Heart left ventricle (tissue), 16 donors: ENCODE measurements at regions of chr7 and their contacts with region 1.

Region 1: GRCh38 chr7:107372298-107372697 is 97.6 kb upstream of the GPR22 start:
- DNase-seq: no peak
- ATAC-seq: peak in 1 of 4 donors; percentile 60
- H3K4me3 ChIP-seq: no peak overlapping the region
- H3K27ac ChIP-seq: peak overlapping the region in 1 of 12 donors; percentile 29
- H3K4me1 ChIP-seq: peaks cover 0 to 5% (median under 1%) of the 10 kb centered on the region in 12 donors
- H3K27me3 ChIP-seq: no peaks in the 10 kb centered on the region
- CTCF ChIP-seq: no peak
- POLR2A ChIP-seq: no peak

Region 2: DNA sequence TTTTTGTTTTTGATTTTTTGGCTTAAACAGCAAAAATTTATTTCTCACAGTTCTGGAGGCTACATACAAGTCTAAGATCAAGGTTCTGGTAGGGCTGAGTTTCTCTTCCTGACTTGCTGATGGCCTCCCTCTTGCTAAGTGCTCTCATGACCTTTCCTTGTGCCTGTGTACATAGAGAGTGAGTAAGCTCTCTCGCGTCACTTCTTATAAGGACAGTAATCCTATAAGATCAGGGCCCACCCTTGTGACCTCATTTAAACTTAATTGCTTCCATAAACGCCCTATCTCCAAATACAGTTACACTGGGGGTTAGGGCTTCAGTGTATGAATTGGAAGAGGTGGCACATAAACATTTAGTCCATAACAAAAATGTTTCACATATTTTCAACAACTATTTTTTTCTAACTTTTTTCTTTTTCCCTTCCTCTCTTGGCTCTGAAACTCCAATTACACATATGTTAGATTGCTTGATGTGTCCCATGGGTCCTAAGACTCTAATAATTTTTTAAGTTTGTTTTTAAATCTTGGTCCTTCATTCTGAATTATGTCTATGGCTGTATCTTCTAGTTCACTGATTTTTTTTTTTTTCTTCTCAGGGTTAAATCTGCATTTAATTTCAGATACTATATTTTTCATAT is 53.7 kb before region 1 on chr7:
- intact Hi-C with region 1: no loop called
- DNase-seq: no peak
- ATAC-seq: no peak
- H3K4me3 ChIP-seq: no peak overlapping the region
- H3K27ac ChIP-seq: no peak overlapping the region
- H3K4me1 ChIP-seq: peaks cover 0 to 12% (median 7%) of the 10 kb centered on the region in 12 donors
- H3K27me3 ChIP-seq: no peaks in the 10 kb centered on the region
- CTCF ChIP-seq: no peak
- POLR2A ChIP-seq: no peak

Region 3: GRCh38 chr7:107414198-107414597 is 41.9 kb after region 1 on chr7:
- intact Hi-C with region 1: loop called in 1 of 10 experiments (anchors 2 kb)
- DNase-seq: no peak
- ATAC-seq: no peak
- H3K4me3 ChIP-seq: no peak overlapping the region
- H3K27ac ChIP-seq: no peak overlapping the region
- H3K4me1 ChIP-seq: no peaks in the 10 kb centered on the region
- H3K27me3 ChIP-seq: no peaks in the 10 kb centered on the region
- CTCF ChIP-seq: no peak
- POLR2A ChIP-seq: no peak

Region 4: GRCh38 chr7:107435749-107436148 is 63.5 kb after region 1 on chr7:
- intact Hi-C with region 1: no loop called
- DNase-seq: no peak
- ATAC-seq: no peak
- H3K4me3 ChIP-seq: no peak overlapping the region
- H3K27ac ChIP-seq: no peak overlapping the region
- H3K4me1 ChIP-seq: peaks cover 0 to 4% (median 0%) of the 10 kb centered on the region in 12 donors
- H3K27me3 ChIP-seq: no peaks in the 10 kb centered on the region
- CTCF ChIP-seq: no peak
- POLR2A ChIP-seq: no peak

Region 5: GRCh38 chr7:107474104-107474521 is 101.8 kb after region 1 on chr7:
- intact Hi-C with region 1: no loop called
- DNase-seq: no peak
- ATAC-seq: peak; percentile 57 to 78 (median 62)
- H3K4me3 ChIP-seq: peak overlapping the region in 11 of 12 donors; percentile 13 to 56 (median 42)
- H3K27ac ChIP-seq: peak overlapping the region; percentile 42 to 84 (median 74)
- H3K4me1 ChIP-seq: peaks cover 0 to 20% (median 0%) of the 10 kb centered on the region in 12 donors
- H3K27me3 ChIP-seq: no peaks in the 10 kb centered on the region
- CTCF ChIP-seq: no peak
- POLR2A ChIP-seq: no peak

Region 6: GRCh38 chr7:107779647-107780099 is 407.4 kb after region 1 on chr7:
- intact Hi-C with region 1: no loop called
- DNase-seq: no peak
- ATAC-seq: no peak
- H3K4me3 ChIP-seq: no peak overlapping the region
- H3K27ac ChIP-seq: peak overlapping the region in 1 of 12 donors; percentile 71
- H3K4me1 ChIP-seq: no peaks in the 10 kb centered on the region
- H3K27me3 ChIP-seq: peaks cover 0 to 5% (median 0%) of the 10 kb centered on the region in 9 donors
- CTCF ChIP-seq: no peak
- POLR2A ChIP-seq: no peak